ENCODE measurements at regions of chr7 and their contacts with region 1.

Region 1: DNA sequence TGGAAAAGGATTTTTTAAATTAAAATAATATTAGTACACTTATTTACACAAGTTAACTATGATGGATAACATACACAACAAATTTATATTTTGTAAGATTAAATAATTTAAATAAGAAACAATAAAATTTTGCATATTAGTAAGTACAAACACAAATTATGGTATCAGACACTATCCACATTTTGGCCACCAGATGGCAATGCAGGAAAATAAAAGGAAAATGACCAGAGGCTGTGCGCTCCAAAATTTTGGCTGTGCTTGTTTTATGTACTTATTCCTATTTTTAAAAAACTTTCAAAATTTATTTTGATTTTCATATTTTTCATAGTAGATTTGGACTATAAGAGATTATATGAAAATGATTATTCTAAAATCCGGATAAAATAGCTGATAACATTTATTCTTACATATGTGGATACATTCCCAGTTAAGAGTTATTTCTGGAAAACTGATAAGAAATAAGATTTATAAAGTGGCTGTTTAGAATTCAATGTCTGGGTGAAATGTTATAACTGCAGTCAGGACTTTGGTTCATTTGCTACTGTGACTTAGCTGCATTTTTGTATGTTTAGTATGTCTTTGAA is 274.7 kb upstream of the HGF start:
- DNase-seq: no peak
- ATAC-seq: peak; percentile 56
- H3K4me3 ChIP-seq: no peak overlapping the region
- H3K27ac ChIP-seq: no peak overlapping the region
- H3K4me1 ChIP-seq: no peaks in the 10 kb centered on the region
- H3K27me3 ChIP-seq: no peaks in the 10 kb centered on the region
- CTCF ChIP-seq: peak; percentile 42 to 75 (median 47); a peak in 5 of 6 replicates
- EP300 ChIP-seq: no peak
- POLR2A ChIP-seq: no peak
- RAD21 ChIP-seq: peak; percentile 85

Region 2: GRCh38 chr7:82080254-82080927 is 35.8 kb after region 1 on chr7:
- CTCF ChIA-PET with region 1: interaction called, 13 read pairs
- POLR2A ChIA-PET with region 1: interaction called, 5 read pairs
- RAD21 ChIA-PET with region 1: interaction called, 30 read pairs
- SMC1A ChIA-PET with region 1: interaction called, 39 read pairs
- in situ Hi-C with region 1: no loop called
- intact Hi-C with region 1: no loop called
- DNase-seq: peak; percentile 13
- ATAC-seq: peak; percentile 88
- H3K4me3 ChIP-seq: no peak overlapping the region
- H3K27ac ChIP-seq: no peak overlapping the region
- H3K4me1 ChIP-seq: no peaks in the 10 kb centered on the region
- H3K27me3 ChIP-seq: no peaks in the 10 kb centered on the region
- CTCF ChIP-seq: no peak
- EP300 ChIP-seq: 0 out of 4 replicates have a peak, but pooled peaks of 1 of the 2 experiments have one; percentile 30
- POLR2A ChIP-seq: no peak
- RAD21 ChIP-seq: no peak

Region 3: GRCh38 chr7:82114237-82114636 is 69.6 kb after region 1 on chr7:
- CTCF ChIA-PET with region 1: interaction called, 38 read pairs
- POLR2A ChIA-PET with region 1: no interaction called
- RAD21 ChIA-PET with region 1: interaction called, 45 read pairs
- SMC1A ChIA-PET with region 1: interaction called, 28 read pairs
- in situ Hi-C with region 1: no loop called
- intact Hi-C with region 1: no loop called
- DNase-seq: no peak
- ATAC-seq: peak; percentile 54
- H3K4me3 ChIP-seq: no peak overlapping the region
- H3K27ac ChIP-seq: no peak overlapping the region
- H3K4me1 ChIP-seq: no peaks in the 10 kb centered on the region
- H3K27me3 ChIP-seq: no peaks in the 10 kb centered on the region
- CTCF ChIP-seq: no peak; a peak in 1 of 6 replicates
- EP300 ChIP-seq: no peak
- POLR2A ChIP-seq: no peak
- RAD21 ChIP-seq: no peak

Region 4: GRCh38 chr7:82172017-82172416 is 127.4 kb after region 1 on chr7:
- CTCF ChIA-PET with region 1: interaction called, 23 read pairs
- POLR2A ChIA-PET with region 1: no interaction called
- RAD21 ChIA-PET with region 1: interaction called, 10 read pairs
- SMC1A ChIA-PET with region 1: interaction called, 7 read pairs
- in situ Hi-C with region 1: no loop called
- intact Hi-C with region 1: loop called (anchors 10 kb)
- DNase-seq: no peak
- ATAC-seq: peak; percentile 64
- H3K4me3 ChIP-seq: no peak overlapping the region
- H3K27ac ChIP-seq: no peak overlapping the region
- H3K4me1 ChIP-seq: no peaks in the 10 kb centered on the region
- H3K27me3 ChIP-seq: no peaks in the 10 kb centered on the region
- CTCF ChIP-seq: peak in 1 of 3 experiments; percentile 5; a peak in 2 of 6 replicates
- EP300 ChIP-seq: no peak
- POLR2A ChIP-seq: no peak
- RAD21 ChIP-seq: peak; percentile 36; the same call in 1 of the 2 replicates

Region 5: GRCh38 chr7:82234457-82235049 is 190.0 kb after region 1 on chr7:
- CTCF ChIA-PET with region 1: interaction called, 14 read pairs
- POLR2A ChIA-PET with region 1: no interaction called
- RAD21 ChIA-PET with region 1: interaction called, 10 read pairs
- SMC1A ChIA-PET with region 1: interaction called, 29 read pairs
- in situ Hi-C with region 1: no loop called
- intact Hi-C with region 1: loop called (anchors 2 kb)
- DNase-seq: no peak
- ATAC-seq: peak; percentile 60
- H3K4me3 ChIP-seq: no peak overlapping the region
- H3K27ac ChIP-seq: no peak overlapping the region
- H3K4me1 ChIP-seq: no peaks in the 10 kb centered on the region
- H3K27me3 ChIP-seq: no peaks in the 10 kb centered on the region
- CTCF ChIP-seq: peak; percentile 34 to 51 (median 49); a peak in 5 of 6 replicates
- EP300 ChIP-seq: no peak
- POLR2A ChIP-seq: no peak
- RAD21 ChIP-seq: peak; percentile 69

Region 6: GRCh38 chr7:82594665-82595064 is 550.1 kb after region 1 on chr7:
- CTCF ChIA-PET with region 1: interaction called, 11 read pairs
- POLR2A ChIA-PET with region 1: no interaction called
- RAD21 ChIA-PET with region 1: interaction called, 4 read pairs
- SMC1A ChIA-PET with region 1: interaction called, 7 read pairs
- in situ Hi-C with region 1: no loop called
- intact Hi-C with region 1: no loop called
- DNase-seq: no peak
- ATAC-seq: no peak; the same call in 2 of the 3 replicates
- H3K4me3 ChIP-seq: no peak overlapping the region
- H3K27ac ChIP-seq: no peak overlapping the region
- H3K4me1 ChIP-seq: no peaks in the 10 kb centered on the region
- H3K27me3 ChIP-seq: no peaks in the 10 kb centered on the region
- CTCF ChIP-seq: no peak
- EP300 ChIP-seq: no peak
- POLR2A ChIP-seq: no peak
- RAD21 ChIP-seq: no peak

Region 7: GRCh38 chr7:82722946-82723345 is 678.4 kb after region 1 on chr7:
- CTCF ChIA-PET with region 1: interaction called, 18 read pairs
- POLR2A ChIA-PET with region 1: no interaction called
- RAD21 ChIA-PET with region 1: interaction called, 16 read pairs
- SMC1A ChIA-PET with region 1: interaction called, 7 read pairs
- in situ Hi-C with region 1: no loop called
- intact Hi-C with region 1: loop called (anchors 5 kb)
- DNase-seq: no peak
- ATAC-seq: peak; percentile 67
- H3K4me3 ChIP-seq: no peak overlapping the region
- H3K27ac ChIP-seq: no peak overlapping the region
- H3K4me1 ChIP-seq: no peaks in the 10 kb centered on the region
- H3K27me3 ChIP-seq: no peaks in the 10 kb centered on the region
- CTCF ChIP-seq: no peak
- EP300 ChIP-seq: no peak
- POLR2A ChIP-seq: no peak
- RAD21 ChIP-seq: no peak